ENCODE measurements at regions of chr4 and their contacts with region 1.

Region 1: GRCh38 chr4:67087897-67088296 is 457.4 kb downstream of the CENPC start:
- DNase-seq: peak in 1 of 2 donors; percentile 17
- ATAC-seq: no peak
- H3K4me3 ChIP-seq: no peak overlapping the region
- H3K27ac ChIP-seq: no peak overlapping the region
- H3K4me1 ChIP-seq: no peaks in the 10 kb centered on the region
- H3K27me3 ChIP-seq: no peaks in the 10 kb centered on the region
- CTCF ChIP-seq: peak; percentile 54

Region 2: GRCh38 chr4:67035501-67035900 is 52.4 kb before region 1 on chr4:
- intact Hi-C with region 1: no loop called
- DNase-seq: no peak
- ATAC-seq: no peak
- H3K4me3 ChIP-seq: no peak overlapping the region
- H3K27ac ChIP-seq: no peak overlapping the region
- H3K4me1 ChIP-seq: no peaks in the 10 kb centered on the region
- H3K27me3 ChIP-seq: no peaks in the 10 kb centered on the region
- CTCF ChIP-seq: no peak

Region 3: GRCh38 chr4:67327262-67328017 is 239.5 kb after region 1 on chr4:
- intact Hi-C with region 1: loop called (anchors 5 kb)
- DNase-seq: no peak
- ATAC-seq: peak in 2 of 4 donors; percentile 46 to 72
- H3K4me3 ChIP-seq: no peak overlapping the region
- H3K27ac ChIP-seq: no peak overlapping the region
- H3K4me1 ChIP-seq: no peaks in the 10 kb centered on the region
- H3K27me3 ChIP-seq: peaks cover 0 to 2% (median 0%) of the 10 kb centered on the region in 3 donors
- CTCF ChIP-seq: peak; percentile 82

Measured in psoas muscle (tissue), 8 donors.